ENCODE measurements at regions of chr1 and their contacts with region 1.

Region 1: DNA sequence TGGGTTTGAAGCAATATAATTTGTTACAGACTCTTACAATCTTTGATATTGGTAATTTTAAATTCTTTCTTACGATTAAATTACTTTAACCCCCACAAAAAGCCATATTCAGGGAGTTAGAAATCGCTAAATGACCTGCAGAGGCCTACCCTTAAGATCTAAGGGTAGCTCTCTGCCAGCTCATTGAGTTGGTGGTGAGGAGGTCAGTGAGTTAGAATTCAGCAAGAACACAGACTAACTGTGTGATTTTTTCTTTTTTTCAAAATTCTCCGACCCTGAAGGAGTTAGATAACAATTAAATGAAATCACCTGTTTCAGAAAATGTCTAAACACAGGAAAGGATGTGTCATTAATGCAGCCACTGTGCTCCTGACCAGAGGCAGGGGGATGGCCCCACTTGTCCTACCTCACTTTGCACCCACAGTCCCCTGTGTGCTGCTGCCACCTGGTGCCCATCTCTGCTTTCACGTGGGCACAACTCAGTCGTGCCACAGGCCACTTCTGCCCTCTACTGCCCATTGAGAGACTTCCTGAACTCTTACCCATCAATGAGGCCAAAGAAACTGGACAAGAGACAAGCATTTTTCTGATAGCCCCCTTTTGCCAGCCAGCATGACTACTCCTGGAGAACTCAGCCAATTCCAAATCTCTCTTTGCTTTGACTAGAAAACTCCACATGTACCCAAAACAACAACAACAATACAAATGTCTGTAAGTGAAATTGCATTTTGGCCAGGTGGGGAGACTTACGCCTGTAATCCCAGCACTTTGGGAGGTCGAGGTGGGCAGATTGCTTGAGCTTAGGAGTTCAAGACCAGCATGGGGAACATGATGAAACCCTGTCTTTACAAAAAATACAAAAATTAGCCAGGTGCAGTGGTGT is 8.4 kb downstream of the CFAP45 start:
- DNase-seq: peak; percentile 63 to 91 (median 78)
- ATAC-seq: peak; percentile 93
- H3K4me3 ChIP-seq: no peak overlapping the region
- H3K4me3 Mint-ChIP-seq: no peak overlapping the region
- H3K27ac ChIP-seq: no peak overlapping the region
- H3K27ac Mint-ChIP-seq: no peak overlapping the region
- H3K4me1 ChIP-seq: peaks cover 6% of the 10 kb centered on the region
- H3K4me1 Mint-ChIP-seq: peaks cover 17% of the 10 kb centered on the region
- H3K27me3 ChIP-seq: no peaks in the 10 kb centered on the region
- H3K27me3 Mint-ChIP-seq: no peaks in the 10 kb centered on the region
- CTCF ChIP-seq: peak; percentile 96

Region 2: GRCh38 chr1:159214149-159214760 is 677.3 kb before region 1 on chr1:
- CTCF ChIA-PET with region 1: interaction called, 21 read pairs
- POLR2A ChIA-PET with region 1: no interaction called
- intact Hi-C with region 1: loop called (anchors 1 to 2 kb)
- DNase-seq: peak in 7 of 9 experiments; percentile 6 to 60 (median 32)
- ATAC-seq: no peak
- H3K4me3 ChIP-seq: no peak overlapping the region
- H3K4me3 Mint-ChIP-seq: no peak overlapping the region
- H3K27ac ChIP-seq: no peak overlapping the region
- H3K27ac Mint-ChIP-seq: no peak overlapping the region
- H3K4me1 ChIP-seq: no peaks in the 10 kb centered on the region
- H3K4me1 Mint-ChIP-seq: no peaks in the 10 kb centered on the region
- H3K27me3 ChIP-seq: peaks cover 0 to 4% of the 10 kb centered on the region in 2 experiments
- H3K27me3 Mint-ChIP-seq: peaks cover 36% of the 10 kb centered on the region
- CTCF ChIP-seq: peak; percentile 95

Region 3: GRCh38 chr1:159798893-159799292 is 92.6 kb before region 1 on chr1:
- CTCF ChIA-PET with region 1: interaction called, 531 read pairs
- POLR2A ChIA-PET with region 1: interaction called, 7 read pairs
- intact Hi-C with region 1: loop called (anchors 1 kb)
- DNase-seq: peak; percentile 6 to 77 (median 46)
- ATAC-seq: no peak
- H3K4me3 ChIP-seq: no peak overlapping the region
- H3K4me3 Mint-ChIP-seq: no peak overlapping the region
- H3K27ac ChIP-seq: no peak overlapping the region
- H3K27ac Mint-ChIP-seq: no peak overlapping the region
- H3K4me1 ChIP-seq: peaks cover 22% of the 10 kb centered on the region
- H3K4me1 Mint-ChIP-seq: peaks cover 46% of the 10 kb centered on the region
- H3K27me3 ChIP-seq: no peaks in the 10 kb centered on the region
- H3K27me3 Mint-ChIP-seq: peaks cover 1% of the 10 kb centered on the region
- CTCF ChIP-seq: peak; percentile 68

Region 4: GRCh38 chr1:159867683-159868064 is 23.8 kb before region 1 on chr1:
- CTCF ChIA-PET with region 1: interaction called, 32 read pairs
- POLR2A ChIA-PET with region 1: no interaction called
- intact Hi-C with region 1: no loop called
- DNase-seq: no peak
- ATAC-seq: no peak
- H3K4me3 ChIP-seq: no peak overlapping the region
- H3K4me3 Mint-ChIP-seq: no peak overlapping the region
- H3K27ac ChIP-seq: no peak overlapping the region
- H3K27ac Mint-ChIP-seq: no peak overlapping the region
- H3K4me1 ChIP-seq: peaks cover 10% of the 10 kb centered on the region
- H3K4me1 Mint-ChIP-seq: peaks cover 21% of the 10 kb centered on the region
- H3K27me3 ChIP-seq: no peaks in the 10 kb centered on the region
- H3K27me3 Mint-ChIP-seq: peaks cover 8% of the 10 kb centered on the region
- CTCF ChIP-seq: no peak

Region 5: DNA sequence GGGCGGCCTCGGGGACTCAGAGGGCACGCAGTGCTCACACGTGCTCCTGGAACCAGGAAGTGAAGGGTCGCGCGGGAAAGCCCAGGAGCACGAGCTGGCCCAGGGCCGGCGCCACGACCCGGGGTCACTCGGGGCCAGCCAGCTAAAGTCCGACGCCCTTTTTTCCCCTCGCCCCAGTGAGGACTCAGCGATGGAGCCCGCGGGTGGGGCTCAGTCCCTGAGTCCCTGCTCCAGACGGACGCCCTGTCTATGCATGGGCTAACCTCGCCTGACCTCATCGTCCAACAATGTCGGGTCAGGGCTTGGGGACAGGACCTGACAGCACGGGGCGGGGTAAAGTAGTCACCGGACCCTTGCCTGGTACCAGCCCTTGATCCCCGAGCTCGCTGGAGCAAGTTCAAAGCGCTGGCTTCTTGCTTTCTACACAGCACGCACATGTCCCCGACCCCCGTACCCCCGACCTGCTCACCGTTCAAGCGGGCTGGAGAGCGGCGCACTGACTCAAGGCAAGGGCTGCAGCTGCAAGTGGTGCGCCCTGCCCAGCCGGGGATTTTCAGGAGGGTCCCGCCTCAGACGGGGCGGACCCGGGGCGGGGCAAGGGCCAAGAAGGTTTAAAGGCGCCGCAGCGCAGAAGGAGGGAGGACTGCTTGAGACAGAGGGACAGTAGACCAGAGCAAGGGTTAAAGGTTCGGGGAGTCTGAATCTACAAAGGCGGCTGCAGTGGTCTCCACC is 33.6 kb after region 1 on chr1 and contains the start of gene TAGLN2:
- CTCF ChIA-PET with region 1: interaction called, 54 read pairs
- POLR2A ChIA-PET with region 1: interaction called, 4 read pairs
- intact Hi-C with region 1: loop called in 1 of 2 experiments (anchors 1 kb)
- DNase-seq: peak; percentile 82 to 94 (median 91)
- ATAC-seq: peak; percentile 55
- H3K4me3 ChIP-seq: peak within 1 kb of the TSS; percentile 83 to 96
- H3K4me3 Mint-ChIP-seq: peak within 1 kb of the TSS; percentile 95
- H3K27ac ChIP-seq: peak within 1 kb of the TSS; percentile 94 to 98
- H3K27ac Mint-ChIP-seq: peak within 1 kb of the TSS; percentile 98
- H3K4me1 ChIP-seq: peaks cover 40% of the 10 kb centered on the region
- H3K4me1 Mint-ChIP-seq: peaks cover 53% of the 10 kb centered on the region
- H3K27me3 ChIP-seq: no peaks in the 10 kb centered on the region
- H3K27me3 Mint-ChIP-seq: no peaks in the 10 kb centered on the region
- CTCF ChIP-seq: no peak
- total RNA-seq, gene TAGLN2: 235 to 238 TPM

Region 6: DNA sequence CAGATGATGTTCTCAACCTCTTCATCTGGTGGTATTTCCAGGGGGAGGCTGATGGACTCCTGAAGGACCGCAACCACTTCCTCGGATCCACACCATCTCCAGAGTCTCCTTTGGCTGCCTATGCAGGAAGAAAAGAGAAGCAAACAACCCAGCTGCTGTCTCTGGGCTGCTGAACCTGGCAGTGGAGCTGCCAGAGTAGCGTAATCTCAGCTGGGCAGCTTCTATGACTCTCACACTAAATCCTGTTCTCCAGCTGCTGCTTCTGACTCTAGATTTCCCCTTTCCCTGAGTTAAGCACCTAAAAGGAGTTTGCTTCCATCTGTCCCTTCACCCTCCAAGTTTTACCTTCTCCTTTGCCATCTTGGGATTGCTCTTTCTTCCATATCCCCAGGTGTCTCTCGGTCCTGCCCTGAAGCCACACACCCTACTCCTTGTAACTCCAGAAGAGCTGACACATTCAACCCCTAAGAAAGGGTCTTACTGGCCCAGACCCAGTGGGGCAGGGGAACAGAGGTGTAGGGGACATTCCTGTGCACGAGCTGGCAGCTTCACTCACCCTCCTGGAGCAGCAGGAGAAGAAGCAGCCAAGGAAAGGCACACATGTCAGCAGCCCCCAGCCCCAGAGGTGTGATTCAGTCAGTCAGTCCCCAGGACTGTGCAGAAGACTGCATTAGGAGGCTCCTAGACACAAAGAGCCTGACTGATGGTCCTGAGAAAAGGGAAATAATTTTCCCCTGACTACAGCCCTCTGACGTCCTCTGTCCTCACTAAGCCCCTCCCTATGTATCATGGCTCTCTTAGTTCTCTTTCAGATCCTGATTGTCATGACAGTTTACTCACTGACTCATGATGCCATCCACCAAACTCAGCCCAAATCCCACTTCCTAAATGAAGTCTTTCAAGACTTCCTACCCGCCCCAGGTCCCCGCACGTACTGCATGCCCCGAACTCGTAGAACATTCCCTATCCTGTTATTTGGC is 62.3 kb after region 1 on chr1 and contains the start of gene SLAMF9:
- CTCF ChIA-PET with region 1: interaction called, 10 read pairs
- POLR2A ChIA-PET with region 1: no interaction called
- intact Hi-C with region 1: loop called in 1 of 2 experiments (anchors 5 kb)
- DNase-seq: no peak
- ATAC-seq: no peak
- H3K4me3 ChIP-seq: no peak within 1 kb of the TSS
- H3K4me3 Mint-ChIP-seq: no peak within 1 kb of the TSS
- H3K27ac ChIP-seq: no peak within 1 kb of the TSS
- H3K27ac Mint-ChIP-seq: no peak within 1 kb of the TSS
- H3K4me1 ChIP-seq: no peaks in the 10 kb centered on the region
- H3K4me1 Mint-ChIP-seq: no peaks in the 10 kb centered on the region
- H3K27me3 ChIP-seq: no peaks in the 10 kb centered on the region
- H3K27me3 Mint-ChIP-seq: peaks cover 23% of the 10 kb centered on the region
- CTCF ChIP-seq: no peak
- total RNA-seq, gene SLAMF9: not detected